ENCODE measurements at regions of chr1 and their contacts with region 1.

Region 1: GRCh38 chr1:235783148-235783776 is 83.4 kb downstream of the LYST start:
- DNase-seq: no peak
- ATAC-seq: no peak
- H3K4me3 ChIP-seq: no peak overlapping the region
- H3K4me3 Mint-ChIP-seq: no peak overlapping the region
- H3K27ac ChIP-seq: no peak overlapping the region
- H3K27ac Mint-ChIP-seq: no peak overlapping the region
- H3K4me1 ChIP-seq: no peaks in the 10 kb centered on the region
- H3K4me1 Mint-ChIP-seq: no peaks in the 10 kb centered on the region
- H3K27me3 ChIP-seq: no peaks in the 10 kb centered on the region
- H3K27me3 Mint-ChIP-seq: no peaks in the 10 kb centered on the region
- CTCF ChIP-seq: peak; percentile 70

Region 2: DNA sequence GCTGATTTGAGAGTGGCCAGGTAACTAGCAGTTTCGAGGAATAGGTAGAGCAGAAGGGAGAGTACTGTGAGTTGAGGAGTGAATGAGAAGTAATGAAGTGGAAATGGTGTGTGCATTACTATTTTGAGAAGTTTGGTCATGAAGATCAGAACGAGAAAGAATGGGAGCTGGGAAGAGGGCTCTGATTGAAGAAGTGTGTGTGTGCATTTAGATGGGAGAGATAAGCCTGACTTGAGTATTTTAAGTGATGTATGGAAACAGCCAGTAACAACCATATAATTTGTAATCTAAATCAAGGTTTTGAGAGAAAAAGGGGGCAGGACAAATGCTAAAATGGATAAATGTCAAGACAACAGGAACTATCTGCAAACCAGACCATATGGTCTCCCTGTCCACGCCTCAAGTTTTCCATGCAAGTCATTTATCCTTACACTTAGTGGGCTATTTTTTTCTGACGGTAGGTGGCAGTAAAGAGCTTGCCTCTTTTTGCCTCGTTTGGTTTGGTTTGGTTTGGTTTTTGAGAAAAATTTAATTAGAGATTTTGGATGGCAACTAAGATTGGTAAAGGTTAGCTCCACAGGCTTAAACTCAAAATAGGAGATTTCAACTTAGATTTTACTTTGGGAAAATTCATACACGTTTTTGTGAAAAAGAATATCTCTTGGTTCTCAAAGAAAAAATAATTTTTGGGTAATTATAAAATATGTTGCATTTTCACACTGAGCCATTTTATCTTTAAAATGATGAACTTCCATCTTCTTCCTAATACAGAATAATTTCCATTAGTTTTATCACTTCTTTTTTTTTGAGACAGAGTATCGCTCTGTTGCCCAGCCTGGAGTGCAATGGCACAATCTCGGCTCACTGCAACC is 269.5 kb before region 1 on chr1:
- CTCF ChIA-PET with region 1: interaction called, 5 read pairs
- POLR2A ChIA-PET with region 1: no interaction called
- intact Hi-C with region 1: loop called (anchors 1 kb)
- DNase-seq: peak; percentile 74
- ATAC-seq: peak; percentile 64
- H3K4me3 ChIP-seq: no peak overlapping the region
- H3K4me3 Mint-ChIP-seq: no peak overlapping the region
- H3K27ac ChIP-seq: no peak overlapping the region
- H3K27ac Mint-ChIP-seq: no peak overlapping the region
- H3K4me1 ChIP-seq: no peaks in the 10 kb centered on the region
- H3K4me1 Mint-ChIP-seq: peaks cover 1% of the 10 kb centered on the region
- H3K27me3 ChIP-seq: no peaks in the 10 kb centered on the region
- H3K27me3 Mint-ChIP-seq: peaks cover 36% of the 10 kb centered on the region
- CTCF ChIP-seq: peak; percentile 94

Region 3: DNA sequence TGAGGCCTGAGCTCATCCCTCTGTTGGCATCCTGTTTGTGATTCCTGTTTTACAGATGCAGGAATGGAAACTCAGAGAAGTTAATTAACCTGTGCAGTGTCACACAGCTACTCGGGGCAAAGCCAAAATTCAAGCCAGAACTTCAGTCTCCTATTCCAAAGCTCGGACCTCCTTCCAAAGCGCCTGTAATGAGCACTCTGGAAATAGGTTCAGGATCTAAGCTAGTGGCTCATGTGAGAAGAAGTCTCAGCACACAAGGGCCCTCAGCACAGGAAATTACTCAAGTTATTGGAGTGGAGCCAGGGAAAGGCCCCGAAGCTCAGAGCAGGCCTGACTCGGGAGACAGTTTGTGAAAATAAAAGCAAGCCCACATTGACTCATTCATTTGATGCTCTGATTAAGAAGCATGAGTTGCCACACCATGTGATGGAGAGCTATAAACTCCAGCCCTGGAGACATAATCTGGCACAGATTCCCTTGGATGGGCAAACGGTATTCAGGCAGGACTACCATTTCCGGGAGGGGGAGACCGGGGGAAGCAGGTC is 134.1 kb after region 1 on chr1:
- CTCF ChIA-PET with region 1: no interaction called
- POLR2A ChIA-PET with region 1: no interaction called
- intact Hi-C with region 1: no loop called
- DNase-seq: peak; percentile 53
- ATAC-seq: peak; percentile 49
- H3K4me3 ChIP-seq: no peak overlapping the region
- H3K4me3 Mint-ChIP-seq: peak overlapping the region; percentile 46
- H3K27ac ChIP-seq: no peak overlapping the region
- H3K27ac Mint-ChIP-seq: peak overlapping the region; percentile 10
- H3K4me1 ChIP-seq: peaks cover 8 to 21% of the 10 kb centered on the region in 2 donors
- H3K4me1 Mint-ChIP-seq: peaks cover 34% of the 10 kb centered on the region
- H3K27me3 ChIP-seq: no peaks in the 10 kb centered on the region
- H3K27me3 Mint-ChIP-seq: no peaks in the 10 kb centered on the region
- CTCF ChIP-seq: no peak

Region 4: DNA sequence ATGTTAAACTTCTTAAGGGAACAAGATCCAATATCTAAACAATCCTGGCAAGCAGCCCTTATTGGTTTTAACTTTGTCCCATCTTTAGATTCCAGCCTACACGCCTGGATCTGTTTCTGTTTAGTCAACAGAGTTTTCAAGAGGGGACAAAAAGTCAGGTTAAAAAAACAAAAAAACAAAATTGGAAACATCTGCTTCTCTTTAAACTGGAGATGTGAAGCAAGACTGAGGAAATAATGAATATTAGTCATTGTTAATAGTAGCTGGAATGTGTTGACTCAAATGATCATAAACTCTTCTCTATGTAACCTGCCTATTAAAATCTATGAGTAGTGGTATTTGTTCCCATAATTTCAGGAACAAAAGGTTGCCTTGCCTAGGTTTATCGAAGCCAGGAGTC is 226.6 kb after region 1 on chr1:
- CTCF ChIA-PET with region 1: no interaction called
- POLR2A ChIA-PET with region 1: interaction called, 11 read pairs
- intact Hi-C with region 1: no loop called
- DNase-seq: no peak
- ATAC-seq: no peak
- H3K4me3 ChIP-seq: no peak overlapping the region
- H3K4me3 Mint-ChIP-seq: no peak overlapping the region
- H3K27ac ChIP-seq: no peak overlapping the region
- H3K27ac Mint-ChIP-seq: no peak overlapping the region
- H3K4me1 ChIP-seq: no peaks in the 10 kb centered on the region
- H3K4me1 Mint-ChIP-seq: no peaks in the 10 kb centered on the region
- H3K27me3 ChIP-seq: no peaks in the 10 kb centered on the region
- H3K27me3 Mint-ChIP-seq: no peaks in the 10 kb centered on the region
- CTCF ChIP-seq: no peak